Caco-2 (cell line): ENCODE measurements at regions of chr14 and their contacts with region 1.

Region 1: GRCh38 chr14:24481622-24482324 is 26.3 kb downstream of the CMA1 start:
- DNase-seq: peak; percentile 79 to 87
- H3K4me3 ChIP-seq: no peak overlapping the region
- H3K4me3 Mint-ChIP-seq: no peak overlapping the region
- H3K27ac Mint-ChIP-seq: no peak overlapping the region
- H3K4me1 ChIP-seq: peaks cover 4% of the 10 kb centered on the region
- H3K4me1 Mint-ChIP-seq: no peaks in the 10 kb centered on the region
- H3K27me3 ChIP-seq: no peaks in the 10 kb centered on the region
- H3K27me3 Mint-ChIP-seq: no peaks in the 10 kb centered on the region
- CTCF ChIP-seq: peak; percentile 65 to 83

Region 2: GRCh38 chr14:24605435-24606190 is 123.8 kb after region 1 on chr14:
- CTCF ChIA-PET with region 1: no interaction called
- POLR2A ChIA-PET with region 1: no interaction called
- intact Hi-C with region 1: loop called (anchors 10 kb)
- DNase-seq: peak in 1 of 2 experiments; percentile 58
- H3K4me3 ChIP-seq: no peak overlapping the region
- H3K4me3 Mint-ChIP-seq: no peak overlapping the region
- H3K27ac Mint-ChIP-seq: no peak overlapping the region
- H3K4me1 ChIP-seq: no peaks in the 10 kb centered on the region
- H3K4me1 Mint-ChIP-seq: no peaks in the 10 kb centered on the region
- H3K27me3 ChIP-seq: no peaks in the 10 kb centered on the region
- H3K27me3 Mint-ChIP-seq: no peaks in the 10 kb centered on the region
- CTCF ChIP-seq: peak; percentile 53 to 79

Region 3: DNA sequence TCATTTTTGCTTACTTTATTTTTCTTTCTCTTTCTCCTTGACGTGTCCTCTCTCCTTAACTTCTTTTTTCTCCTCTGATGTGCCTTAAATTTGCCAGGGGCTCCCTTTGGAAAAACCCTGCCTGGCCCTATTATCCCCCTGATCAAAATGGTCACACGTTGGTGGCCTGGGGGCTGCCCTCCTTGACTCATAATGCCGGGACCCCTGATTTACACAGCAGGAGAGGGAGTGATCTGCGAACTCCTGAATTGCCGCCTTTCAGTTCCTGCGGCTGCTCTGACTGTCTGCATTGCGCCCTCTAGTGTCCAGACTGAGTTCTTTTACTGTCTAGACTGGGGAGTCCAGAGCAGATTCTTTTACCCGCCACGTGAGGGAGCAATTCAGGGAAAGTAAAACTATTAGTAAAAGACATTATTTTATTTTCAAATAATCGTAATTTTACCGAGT is 197.1 kb after region 1 on chr14:
- CTCF ChIA-PET with region 1: no interaction called
- POLR2A ChIA-PET with region 1: no interaction called
- intact Hi-C with region 1: loop called (anchors 1 kb)
- DNase-seq: peak; percentile 80 to 81
- H3K4me3 ChIP-seq: no peak overlapping the region
- H3K4me3 Mint-ChIP-seq: peak overlapping the region; percentile 48
- H3K27ac Mint-ChIP-seq: no peak overlapping the region
- H3K4me1 ChIP-seq: no peaks in the 10 kb centered on the region
- H3K4me1 Mint-ChIP-seq: peaks cover 5% of the 10 kb centered on the region
- H3K27me3 ChIP-seq: no peaks in the 10 kb centered on the region
- H3K27me3 Mint-ChIP-seq: peaks cover 25% of the 10 kb centered on the region
- CTCF ChIP-seq: peak; percentile 87 to 98